ENCODE measurements at regions of chr7 and their contacts with region 1.

Region 1: GRCh38 chr7:22110227-22110839 is 164.6 kb upstream of the CDCA7L start:
- DNase-seq: peak; percentile 49
- H3K4me3 ChIP-seq: no peak overlapping the region
- CTCF ChIP-seq: peak; percentile 78

Region 2: GRCh38 chr7:22121702-22122474 is 11.6 kb after region 1 on chr7:
- CTCF ChIA-PET with region 1: interaction called, 153 read pairs
- POLR2A ChIA-PET with region 1: no interaction called
- DNase-seq: no peak
- H3K4me3 ChIP-seq: no peak overlapping the region
- CTCF ChIP-seq: no peak

Region 3: DNA sequence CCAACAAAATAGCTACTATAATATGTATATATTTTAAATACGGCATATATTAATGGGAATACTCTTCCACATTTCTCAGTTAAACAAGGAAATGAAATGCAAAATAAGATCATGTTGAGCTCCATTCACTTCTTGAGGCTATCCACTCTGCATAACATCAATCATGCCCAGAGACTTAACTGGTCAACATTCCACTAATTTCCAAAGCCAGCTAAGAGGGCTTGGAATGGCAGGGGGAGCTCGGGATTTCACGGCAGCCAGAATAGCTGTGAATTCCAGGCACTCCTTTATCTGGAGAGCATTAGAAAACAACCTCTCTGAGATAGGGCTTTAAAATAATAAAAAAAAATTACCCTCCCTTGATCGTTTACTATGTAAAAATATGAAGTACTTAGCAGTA is 30.2 kb after region 1 on chr7:
- CTCF ChIA-PET with region 1: interaction called, 20 read pairs
- POLR2A ChIA-PET with region 1: no interaction called
- DNase-seq: no peak
- H3K4me3 ChIP-seq: no peak overlapping the region
- CTCF ChIP-seq: no peak

Region 4: DNA sequence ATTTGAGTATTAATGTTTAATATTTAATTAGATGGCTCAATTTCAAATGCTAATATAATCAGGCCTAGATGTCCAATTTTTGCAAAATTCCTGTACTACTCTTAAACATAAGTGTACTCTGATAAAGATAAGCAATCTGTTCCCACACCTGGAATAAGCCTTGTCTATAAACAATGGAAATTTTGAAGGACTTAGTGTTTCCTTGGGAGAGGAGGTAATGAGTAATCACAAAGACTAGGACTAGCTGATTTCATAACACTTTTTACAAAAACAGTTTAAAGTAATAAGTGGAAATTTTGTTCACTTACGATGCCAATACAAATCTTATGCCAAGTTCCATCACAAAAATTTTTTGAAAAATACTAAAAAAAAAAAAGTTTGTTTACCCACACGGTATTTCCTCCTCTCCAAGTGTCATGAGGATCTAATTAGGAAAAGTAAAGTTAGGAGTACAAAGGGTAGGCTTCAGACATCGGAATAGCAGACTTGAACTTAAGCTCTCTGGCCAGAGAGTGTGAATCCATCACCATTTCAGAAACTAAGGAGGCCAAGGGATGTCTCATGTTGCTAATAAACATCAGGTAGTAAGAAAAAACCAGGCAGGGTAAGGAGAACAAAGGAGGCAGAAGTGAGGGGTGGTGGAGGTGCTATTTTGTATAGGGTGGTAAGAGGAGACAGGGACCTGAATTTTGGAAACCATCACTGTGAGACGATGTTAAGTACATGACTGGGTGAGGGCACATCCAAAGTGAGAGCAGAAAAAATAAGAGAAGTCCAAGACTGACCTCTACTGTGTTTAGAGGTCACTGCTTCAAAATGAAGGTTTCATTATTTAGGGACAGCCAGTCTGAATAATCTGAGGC is 185.3 kb after region 1 on chr7:
- CTCF ChIA-PET with region 1: interaction called, 185 read pairs
- POLR2A ChIA-PET with region 1: no interaction called
- DNase-seq: no peak
- H3K4me3 ChIP-seq: no peak overlapping the region
- CTCF ChIP-seq: no peak

Region 5: DNA sequence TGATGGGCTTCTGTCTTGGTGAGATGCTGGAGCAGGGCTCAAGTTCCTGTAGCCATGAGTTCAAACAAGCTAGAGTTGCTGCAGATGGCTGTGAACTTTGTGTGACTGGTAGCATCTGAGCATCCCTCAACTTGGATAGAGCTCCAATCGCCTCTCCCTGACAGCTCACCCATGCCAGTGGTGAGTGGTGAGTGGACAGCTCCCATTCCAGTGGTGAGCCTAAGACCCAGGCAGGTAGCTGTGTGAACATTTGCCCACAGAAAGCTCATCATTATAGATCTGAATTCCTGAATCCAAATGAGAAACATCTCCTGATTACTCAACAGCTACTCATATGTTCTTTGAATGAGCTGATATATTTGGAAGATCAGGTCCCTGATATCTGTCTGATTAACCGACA is 364.3 kb after region 1 on chr7:
- CTCF ChIA-PET with region 1: interaction called, 232 read pairs
- POLR2A ChIA-PET with region 1: no interaction called
- DNase-seq: no peak
- H3K4me3 ChIP-seq: no peak overlapping the region
- CTCF ChIP-seq: no peak

Region 6: GRCh38 chr7:22499044-22499443 is 388.7 kb after region 1 on chr7:
- CTCF ChIA-PET with region 1: interaction called, 67 read pairs
- POLR2A ChIA-PET with region 1: no interaction called
- DNase-seq: no peak
- H3K4me3 ChIP-seq: no peak overlapping the region
- CTCF ChIP-seq: no peak

Measured in AG04449 (cell line).